ENCODE measurements at regions of chr20 and their contacts with region 1.

Region 1: DNA sequence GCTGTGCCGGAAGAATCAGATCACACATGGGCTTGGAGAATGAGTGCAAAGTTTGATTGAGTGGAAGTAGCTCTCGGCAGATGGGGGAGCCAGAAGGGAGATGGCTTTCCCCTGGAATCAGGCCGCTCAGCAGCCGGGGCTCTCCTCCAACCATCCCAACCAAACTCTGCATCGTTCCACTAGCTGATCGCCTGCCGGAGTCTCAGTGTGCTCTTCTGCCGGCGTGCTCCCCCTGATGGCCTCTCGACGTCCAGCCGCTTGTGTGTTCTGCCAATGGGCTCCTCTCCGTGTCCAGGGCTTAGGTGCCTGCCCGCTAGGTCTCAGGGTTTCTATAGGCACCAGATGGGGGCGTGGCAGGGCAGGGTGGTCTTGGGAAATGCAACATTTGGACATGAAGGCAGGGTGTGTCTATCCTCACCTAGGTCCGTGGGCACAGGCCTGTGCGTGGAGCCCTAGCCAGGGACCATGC is 4.9 kb upstream of the BIRC7 start:
- DNase-seq: peak; percentile 48 to 67 (median 61)
- H3K4me3 ChIP-seq: no peak overlapping the region
- H3K27ac ChIP-seq: no peak overlapping the region
- H3K4me1 ChIP-seq: peaks cover 0 to 5% (median 2%) of the 10 kb centered on the region in 4 experiments
- H3K27me3 ChIP-seq: peaks cover 2 to 62% (median 21%) of the 10 kb centered on the region in 5 experiments

Region 2: DNA sequence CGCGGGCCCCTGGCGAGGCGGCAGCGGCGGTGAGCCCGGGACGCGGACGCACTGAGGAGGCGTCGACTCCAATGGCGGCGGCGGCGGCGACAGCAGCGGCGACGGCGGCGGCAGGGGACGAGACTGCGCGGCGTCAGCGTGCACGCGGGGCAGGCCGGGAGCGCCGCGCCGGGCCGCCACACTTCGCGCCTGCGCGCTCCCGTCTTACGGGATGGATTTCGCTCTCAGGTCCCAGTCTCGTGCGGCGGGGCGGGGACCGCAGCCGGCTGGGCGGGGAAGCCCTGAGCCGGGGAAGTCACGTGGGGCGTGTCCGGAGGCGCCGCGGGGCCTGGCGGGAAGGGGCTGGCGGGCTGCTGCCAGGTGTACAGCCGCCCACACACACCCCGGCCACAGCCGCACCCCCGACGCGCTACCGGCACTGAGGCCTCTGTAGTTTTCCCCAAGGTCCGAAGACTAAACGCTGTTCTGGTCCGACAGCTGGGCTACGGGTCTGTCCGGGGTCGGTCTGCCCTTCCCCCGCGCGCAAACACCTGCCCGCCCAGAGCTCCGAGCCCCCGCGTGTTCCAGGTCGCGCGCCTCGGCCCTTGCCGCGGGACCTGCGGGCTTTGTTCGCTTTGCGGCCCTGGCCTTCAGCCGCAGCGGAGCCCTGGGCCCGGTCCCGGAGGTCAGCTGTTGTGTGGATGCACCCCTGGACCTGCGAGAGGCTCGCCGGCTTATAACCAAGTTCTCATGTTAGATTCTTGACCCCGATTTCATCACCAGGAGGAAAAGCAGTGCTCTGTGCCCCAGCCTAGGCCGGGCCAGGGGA is 14.6 kb before region 1 on chr20 and contains the start of gene YTHDF1:
- CTCF ChIA-PET with region 1: interaction called, 54 read pairs
- POLR2A ChIA-PET with region 1: no interaction called
- DNase-seq: peak; percentile 93 to 96 (median 96)
- H3K4me3 ChIP-seq: peak within 1 kb of the TSS; percentile 67 to 91 (median 83)
- H3K27ac ChIP-seq: peak within 1 kb of the TSS; percentile 70 to 88
- H3K4me1 ChIP-seq: peaks cover 2 to 20% (median 18%) of the 10 kb centered on the region in 4 experiments
- H3K27me3 ChIP-seq: peaks cover 0 to 1% (median 0%) of the 10 kb centered on the region in 5 experiments

Region 3: GRCh38 chr20:63253438-63254236 is 22.8 kb after region 1 on chr20:
- CTCF ChIA-PET with region 1: no interaction called
- POLR2A ChIA-PET with region 1: no interaction called
- DNase-seq: peak in 2 of 3 donors; percentile 21 to 37
- H3K4me3 ChIP-seq: peak overlapping the region in 1 of 7 experiments; percentile 26
- H3K27ac ChIP-seq: no peak overlapping the region
- H3K4me1 ChIP-seq: peaks cover 0 to 16% (median 5%) of the 10 kb centered on the region in 4 experiments
- H3K27me3 ChIP-seq: peaks cover 7 to 93% (median 43%) of the 10 kb centered on the region in 5 experiments

Region 4: GRCh38 chr20:63272584-63273579 is 42.0 kb after region 1 on chr20 and contains the start of gene ARFGAP1:
- CTCF ChIA-PET with region 1: no interaction called
- POLR2A ChIA-PET with region 1: no interaction called
- DNase-seq: peak; percentile 90 to 95 (median 92)
- H3K4me3 ChIP-seq: peak within 1 kb of the TSS; percentile 59 to 93 (median 79)
- H3K27ac ChIP-seq: peak within 1 kb of the TSS; percentile 50 to 89
- H3K4me1 ChIP-seq: peaks cover 0 to 20% (median 14%) of the 10 kb centered on the region in 4 experiments
- H3K27me3 ChIP-seq: peaks cover 0 to 17% (median 9%) of the 10 kb centered on the region in 5 experiments